ENCODE measurements at regions of chr7 and their contacts with region 1.

Region 1: GRCh38 chr7:24819916-24820689 is 62.8 kb upstream of the GSDME start:
- DNase-seq: peak; percentile 94
- H3K4me3 Mint-ChIP-seq: peak overlapping the region; percentile 71
- H3K27ac Mint-ChIP-seq: peak overlapping the region; percentile 96
- H3K4me1 Mint-ChIP-seq: peaks cover 44% of the 10 kb centered on the region
- H3K27me3 Mint-ChIP-seq: no peaks in the 10 kb centered on the region

Region 2: GRCh38 chr7:24757353-24758275 is 62.5 kb before region 1 on chr7 and contains the start of gene GSDME:
- intact Hi-C with region 1: loop called (anchors 2 kb)
- DNase-seq: peak; percentile 86
- H3K4me3 Mint-ChIP-seq: peak within 1 kb of the TSS; percentile 94
- H3K27ac Mint-ChIP-seq: peak within 1 kb of the TSS; percentile 84
- H3K4me1 Mint-ChIP-seq: peaks cover 32% of the 10 kb centered on the region
- H3K27me3 Mint-ChIP-seq: peaks cover 36% of the 10 kb centered on the region
- total RNA-seq, gene GSDME: 9.6 and 10.4 TPM in 2 replicates

Region 3: GRCh38 chr7:24907311-24907886 is 87.3 kb after region 1 on chr7:
- intact Hi-C with region 1: loop called (anchors 1 kb)
- DNase-seq: peak; percentile 84
- H3K4me3 Mint-ChIP-seq: no peak overlapping the region
- H3K27ac Mint-ChIP-seq: no peak overlapping the region
- H3K4me1 Mint-ChIP-seq: peaks cover 33% of the 10 kb centered on the region
- H3K27me3 Mint-ChIP-seq: no peaks in the 10 kb centered on the region

Region 4: GRCh38 chr7:24979863-24980533 is 159.9 kb after region 1 on chr7 and contains the start of gene OSBPL3:
- intact Hi-C with region 1: loop called (anchors 1 kb)
- DNase-seq: peak; percentile 98
- H3K4me3 Mint-ChIP-seq: peak within 1 kb of the TSS; percentile 96
- H3K27ac Mint-ChIP-seq: peak within 1 kb of the TSS; percentile 96
- H3K4me1 Mint-ChIP-seq: peaks cover 53% of the 10 kb centered on the region
- H3K27me3 Mint-ChIP-seq: no peaks in the 10 kb centered on the region
- total RNA-seq, gene OSBPL3: 93.7 and 93.8 TPM in 2 replicates

Region 5: DNA sequence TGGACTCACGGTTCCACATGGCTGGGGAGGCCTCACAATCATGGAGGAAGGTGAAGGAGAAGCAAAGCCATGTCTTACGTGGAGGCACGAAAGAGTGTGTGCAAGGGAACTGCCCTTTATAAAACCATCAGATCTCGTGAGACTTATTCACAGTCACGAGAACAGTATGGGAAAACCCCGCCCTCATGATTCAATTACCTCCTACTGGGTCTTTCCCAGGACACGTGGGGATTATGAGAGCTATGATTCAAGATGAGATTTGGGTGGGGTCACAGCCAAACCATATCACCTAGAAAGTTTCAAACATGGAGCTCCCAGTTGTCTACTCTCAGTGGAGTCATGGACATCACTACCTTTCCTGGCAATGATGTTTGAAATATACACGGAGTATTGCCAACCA is 255.4 kb after region 1 on chr7:
- intact Hi-C with region 1: loop called (anchors 1 kb)
- DNase-seq: no peak
- H3K4me3 Mint-ChIP-seq: no peak overlapping the region
- H3K27ac Mint-ChIP-seq: no peak overlapping the region
- H3K4me1 Mint-ChIP-seq: peaks cover 7% of the 10 kb centered on the region
- H3K27me3 Mint-ChIP-seq: peaks cover 12% of the 10 kb centered on the region

Region 6: DNA sequence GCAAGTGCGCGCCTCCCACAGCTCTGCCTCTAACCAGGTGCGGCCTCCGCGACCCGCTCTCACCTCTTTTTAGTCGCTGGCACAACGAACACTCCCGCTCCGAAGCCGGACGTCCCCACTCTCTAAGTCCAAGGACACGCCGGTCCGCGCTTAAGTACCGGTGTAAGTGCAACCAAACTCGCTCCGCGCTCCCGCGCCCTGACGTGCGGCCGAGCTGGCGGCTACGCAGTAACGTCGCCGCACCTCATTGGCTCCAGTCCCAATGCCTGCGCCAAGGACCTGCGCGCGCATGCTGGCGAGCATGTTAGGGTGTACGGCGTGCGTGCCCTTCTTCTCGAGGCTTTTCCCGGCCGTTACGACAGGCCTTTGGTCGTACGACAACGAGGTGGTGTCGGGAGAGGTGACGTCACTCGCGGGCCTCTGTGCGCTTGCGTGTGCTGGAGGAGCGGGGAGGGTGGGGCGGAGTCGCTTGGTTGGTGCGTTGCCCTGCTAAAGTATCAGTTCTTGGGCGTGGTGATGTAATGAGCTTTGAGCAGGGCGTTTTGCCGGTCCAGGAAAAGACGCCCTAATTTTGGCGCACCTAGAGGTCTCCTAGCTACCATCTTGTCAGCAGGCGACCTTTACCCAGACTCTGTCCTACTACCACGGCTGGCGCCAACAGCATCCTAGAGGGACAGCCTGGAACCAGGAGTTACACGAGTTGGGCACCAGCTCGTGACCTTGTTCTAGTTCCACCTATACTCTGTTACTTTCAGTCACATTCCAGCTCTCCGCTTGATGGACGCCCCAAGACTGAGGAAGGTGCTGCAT is 305.2 kb after region 1 on chr7 and contains the start of gene CYCS:
- intact Hi-C with region 1: loop called (anchors 1 kb)
- DNase-seq: peak; percentile 100
- H3K4me3 Mint-ChIP-seq: peak within 1 kb of the TSS; percentile 96
- H3K27ac Mint-ChIP-seq: peak within 1 kb of the TSS; percentile 95
- H3K4me1 Mint-ChIP-seq: peaks cover 31% of the 10 kb centered on the region
- H3K27me3 Mint-ChIP-seq: no peaks in the 10 kb centered on the region
- total RNA-seq, gene CYCS: 280 and 290 TPM in 2 replicates

Measured in activated CD4-positive, alpha-beta T cell treated with anti-CD3 and anti-CD28 coated beads, Interleukin-2, amount 10 ng/mL, durations not matched to agents 24 days and 14 days (primary cell).